ENCODE measurements at regions of chr5 and their contacts with region 1.

Region 1: GRCh38 chr5:120446068-120446492 is 18.0 kb upstream of the PRR16 start:
- DNase-seq: peak in 1 of 2 donors; percentile 44
- ATAC-seq: peak; percentile 68
- H3K4me3 ChIP-seq: no peak overlapping the region
- H3K27ac ChIP-seq: peak overlapping the region in 1 of 2 donors; percentile 59
- H3K4me1 ChIP-seq: peaks cover 0 to 2% of the 10 kb centered on the region in 2 donors
- H3K27me3 ChIP-seq: no peaks in the 10 kb centered on the region

Region 2: DNA sequence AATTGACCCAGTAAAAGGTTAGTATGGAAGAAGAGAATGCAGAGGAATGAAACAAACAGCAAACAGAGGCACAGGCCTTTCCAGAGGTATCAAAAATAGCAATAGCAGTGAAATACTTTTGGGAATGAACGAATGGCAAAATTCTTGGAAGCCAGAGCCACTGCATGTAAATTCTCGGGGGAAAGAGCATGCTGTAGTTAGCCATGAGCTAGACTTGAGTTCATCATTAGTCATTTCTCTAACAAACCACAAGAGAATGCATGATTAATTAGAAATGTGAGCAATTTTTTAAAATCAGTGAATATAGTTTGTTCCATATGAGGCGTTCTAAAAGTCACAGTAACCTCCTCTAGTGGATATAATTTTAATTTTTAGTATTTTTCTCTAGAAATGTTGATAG is 152.3 kb before region 1 on chr5:
- intact Hi-C with region 1: loop called in 1 of 2 experiments (anchors 10 kb)
- DNase-seq: no peak
- ATAC-seq: no peak
- H3K4me3 ChIP-seq: no peak overlapping the region
- H3K27ac ChIP-seq: no peak overlapping the region
- H3K4me1 ChIP-seq: peaks cover 3 to 4% of the 10 kb centered on the region in 2 donors
- H3K27me3 ChIP-seq: no peaks in the 10 kb centered on the region

Region 3: GRCh38 chr5:120388016-120388781 is 57.9 kb before region 1 on chr5:
- intact Hi-C with region 1: loop called in 1 of 2 experiments (anchors 10 kb)
- DNase-seq: no peak
- ATAC-seq: peak; percentile 81
- H3K4me3 ChIP-seq: no peak overlapping the region
- H3K27ac ChIP-seq: peak overlapping the region; percentile 51 to 77
- H3K4me1 ChIP-seq: peaks cover 0 to 3% of the 10 kb centered on the region in 2 donors
- H3K27me3 ChIP-seq: no peaks in the 10 kb centered on the region

Region 4: GRCh38 chr5:120405286-120405864 is 40.7 kb before region 1 on chr5:
- intact Hi-C with region 1: loop called in 1 of 2 experiments (anchors 5 kb)
- DNase-seq: no peak
- ATAC-seq: peak; percentile 57
- H3K4me3 ChIP-seq: no peak overlapping the region
- H3K27ac ChIP-seq: no peak overlapping the region
- H3K4me1 ChIP-seq: peaks cover 3 to 6% of the 10 kb centered on the region in 2 donors
- H3K27me3 ChIP-seq: no peaks in the 10 kb centered on the region

Region 5: DNA sequence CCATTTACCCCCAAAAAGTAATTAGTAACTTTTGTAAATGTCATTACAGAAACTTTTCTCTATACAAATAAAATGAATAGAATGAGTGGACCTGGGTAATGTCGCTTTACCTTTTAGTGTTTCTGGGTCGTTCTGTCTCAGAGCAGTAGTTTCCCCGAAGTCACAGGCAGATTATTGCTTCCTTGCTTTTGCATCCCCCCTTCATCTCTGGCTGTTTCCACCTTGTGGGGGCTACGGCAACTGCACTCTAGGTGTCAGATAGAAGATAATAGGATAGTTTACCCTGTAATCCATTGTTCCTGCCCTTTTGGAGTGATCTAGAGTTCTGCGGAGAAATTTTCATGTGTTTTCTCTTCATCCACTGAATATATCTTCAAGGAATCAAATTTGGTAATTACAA is 86.8 kb after region 1 on chr5:
- intact Hi-C with region 1: no loop called
- DNase-seq: no peak
- ATAC-seq: no peak
- H3K4me3 ChIP-seq: no peak overlapping the region
- H3K27ac ChIP-seq: no peak overlapping the region
- H3K4me1 ChIP-seq: no peaks in the 10 kb centered on the region
- H3K27me3 ChIP-seq: no peaks in the 10 kb centered on the region

Region 6: GRCh38 chr5:120778491-120779484 is 332.7 kb after region 1 on chr5:
- intact Hi-C with region 1: no loop called
- DNase-seq: no peak
- ATAC-seq: no peak
- H3K4me3 ChIP-seq: no peak overlapping the region
- H3K27ac ChIP-seq: no peak overlapping the region
- H3K4me1 ChIP-seq: no peaks in the 10 kb centered on the region
- H3K27me3 ChIP-seq: no peaks in the 10 kb centered on the region